ENCODE measurements at regions of chr7 and their contacts with region 1.

Region 1: DNA sequence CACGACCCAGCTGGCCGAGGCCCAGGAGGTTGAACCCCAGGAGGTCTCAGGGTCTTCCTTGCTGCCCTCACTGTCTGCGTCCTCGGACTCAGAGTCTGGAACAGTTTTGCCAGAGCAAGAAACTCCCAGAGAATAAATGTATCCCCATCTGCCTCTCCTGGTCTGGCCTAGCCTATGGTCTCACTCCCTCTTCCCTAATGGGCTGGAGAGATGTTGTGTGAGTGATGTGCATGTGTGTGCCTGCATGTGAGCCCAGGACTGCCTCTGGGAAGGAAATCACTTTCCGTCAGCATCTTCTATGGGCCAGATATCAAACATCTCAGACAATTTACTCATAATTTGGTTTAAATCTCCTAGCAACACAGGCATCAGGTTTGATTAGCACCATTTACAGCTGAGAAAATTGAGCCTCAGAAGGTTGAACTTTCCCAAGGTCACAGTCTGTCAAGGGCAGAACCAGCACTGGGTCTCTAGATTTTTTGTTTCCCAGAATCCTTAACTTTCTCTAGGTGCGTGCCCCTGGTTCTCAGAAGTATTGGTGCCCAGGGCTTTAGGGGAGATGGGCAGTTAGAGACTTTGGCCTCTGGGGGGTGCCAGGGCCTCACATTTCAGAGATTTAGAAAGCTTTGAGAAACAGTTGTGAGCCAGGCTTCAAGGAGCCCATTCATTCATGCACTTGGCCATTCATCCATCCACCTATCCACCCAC is 4.9 kb downstream of the TMEM270 start:
- DNase-seq: peak; percentile 67
- ATAC-seq: peak; percentile 74
- H3K4me3 ChIP-seq: no peak overlapping the region
- H3K27ac ChIP-seq: no peak overlapping the region
- H3K4me1 ChIP-seq: no peaks in the 10 kb centered on the region
- H3K27me3 ChIP-seq: no peaks in the 10 kb centered on the region
- CTCF ChIP-seq: peak; percentile 69

Region 2: DNA sequence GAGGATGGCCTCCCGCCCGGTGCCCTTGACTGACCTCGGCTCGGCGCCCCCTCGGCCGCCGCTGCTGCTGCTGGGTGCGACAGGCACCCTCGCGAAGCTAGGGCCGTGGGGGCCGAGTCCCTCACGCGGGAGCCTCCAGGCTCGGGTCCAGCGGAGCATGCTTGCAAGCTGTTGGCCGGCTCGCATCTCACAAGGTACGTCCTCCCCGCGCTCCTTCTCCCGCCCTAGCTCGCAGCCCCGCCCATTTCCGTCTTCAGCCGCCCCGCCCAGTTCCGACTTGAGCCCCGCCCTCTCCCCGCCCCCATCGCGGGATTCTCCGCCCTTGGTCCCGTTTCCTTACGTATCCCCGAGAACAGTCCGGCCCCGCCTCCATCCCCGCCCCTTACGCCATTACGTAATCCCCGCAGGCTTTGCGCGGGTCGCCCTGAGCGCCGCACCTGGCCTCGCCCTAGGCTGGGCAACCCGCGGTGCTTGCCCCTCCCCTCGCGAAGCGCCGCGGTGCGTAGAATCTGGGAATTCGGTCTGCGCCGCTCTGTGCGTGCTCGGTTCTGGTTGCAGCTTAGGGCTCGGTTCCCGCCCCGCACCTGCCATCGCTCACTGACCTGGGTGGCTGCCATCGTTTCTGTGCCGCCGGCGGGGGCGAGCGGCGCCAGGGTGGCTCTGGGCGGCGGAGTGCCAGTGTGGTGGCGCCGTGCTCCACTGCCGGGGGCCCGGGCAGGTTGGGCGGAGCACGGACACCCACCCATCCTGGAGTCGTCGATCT is 127.1 kb before region 1 on chr7 and contains the start of gene ABHD11:
- CTCF ChIA-PET with region 1: no interaction called
- POLR2A ChIA-PET with region 1: no interaction called
- intact Hi-C with region 1: no loop called
- DNase-seq: peak; percentile 95
- ATAC-seq: peak; percentile 76
- H3K4me3 ChIP-seq: peak within 1 kb of the TSS; percentile 92
- H3K27ac ChIP-seq: peak within 1 kb of the TSS; percentile 73
- H3K4me1 ChIP-seq: peaks cover 36% of the 10 kb centered on the region
- H3K27me3 ChIP-seq: no peaks in the 10 kb centered on the region
- CTCF ChIP-seq: 0 out of 2 replicates have a peak, but pooled peaks have one; percentile 14
- total RNA-seq, gene ABHD11: 38.6 and 41.4 TPM in 2 replicates

Region 3: GRCh38 chr7:73828107-73828803 is 37.6 kb before region 1 on chr7:
- CTCF ChIA-PET with region 1: no interaction called
- POLR2A ChIA-PET with region 1: no interaction called
- intact Hi-C with region 1: no loop called
- DNase-seq: peak; percentile 92
- ATAC-seq: peak; percentile 44
- H3K4me3 ChIP-seq: 0 out of 2 replicates have a peak overlapping the region, but pooled peaks have one; percentile 99
- H3K27ac ChIP-seq: peak overlapping the region; percentile 96
- H3K4me1 ChIP-seq: peaks cover 59% of the 10 kb centered on the region
- H3K27me3 ChIP-seq: no peaks in the 10 kb centered on the region
- CTCF ChIP-seq: no peak

Region 4: GRCh38 chr7:74002474-74003017 is 136.7 kb after region 1 on chr7:
- CTCF ChIA-PET with region 1: no interaction called
- POLR2A ChIA-PET with region 1: interaction called, 12 read pairs
- intact Hi-C with region 1: no loop called
- DNase-seq: peak; percentile 72
- ATAC-seq: peak; percentile 100
- H3K4me3 ChIP-seq: no peak overlapping the region
- H3K27ac ChIP-seq: peak overlapping the region; percentile 35; the same call in 1 of the 2 replicates
- H3K4me1 ChIP-seq: peaks cover 11% of the 10 kb centered on the region
- H3K27me3 ChIP-seq: no peaks in the 10 kb centered on the region
- CTCF ChIP-seq: no peak

Region 5: GRCh38 chr7:74026903-74027551 is 161.1 kb after region 1 on chr7:
- CTCF ChIA-PET with region 1: interaction called, 13 read pairs
- POLR2A ChIA-PET with region 1: no interaction called
- intact Hi-C with region 1: loop called (anchors 1 kb)
- DNase-seq: peak; percentile 63
- ATAC-seq: peak; percentile 68
- H3K4me3 ChIP-seq: no peak overlapping the region
- H3K27ac ChIP-seq: no peak overlapping the region
- H3K4me1 ChIP-seq: peaks cover 12% of the 10 kb centered on the region
- H3K27me3 ChIP-seq: peaks cover 18% of the 10 kb centered on the region
- CTCF ChIP-seq: peak; percentile 92

Region 6: DNA sequence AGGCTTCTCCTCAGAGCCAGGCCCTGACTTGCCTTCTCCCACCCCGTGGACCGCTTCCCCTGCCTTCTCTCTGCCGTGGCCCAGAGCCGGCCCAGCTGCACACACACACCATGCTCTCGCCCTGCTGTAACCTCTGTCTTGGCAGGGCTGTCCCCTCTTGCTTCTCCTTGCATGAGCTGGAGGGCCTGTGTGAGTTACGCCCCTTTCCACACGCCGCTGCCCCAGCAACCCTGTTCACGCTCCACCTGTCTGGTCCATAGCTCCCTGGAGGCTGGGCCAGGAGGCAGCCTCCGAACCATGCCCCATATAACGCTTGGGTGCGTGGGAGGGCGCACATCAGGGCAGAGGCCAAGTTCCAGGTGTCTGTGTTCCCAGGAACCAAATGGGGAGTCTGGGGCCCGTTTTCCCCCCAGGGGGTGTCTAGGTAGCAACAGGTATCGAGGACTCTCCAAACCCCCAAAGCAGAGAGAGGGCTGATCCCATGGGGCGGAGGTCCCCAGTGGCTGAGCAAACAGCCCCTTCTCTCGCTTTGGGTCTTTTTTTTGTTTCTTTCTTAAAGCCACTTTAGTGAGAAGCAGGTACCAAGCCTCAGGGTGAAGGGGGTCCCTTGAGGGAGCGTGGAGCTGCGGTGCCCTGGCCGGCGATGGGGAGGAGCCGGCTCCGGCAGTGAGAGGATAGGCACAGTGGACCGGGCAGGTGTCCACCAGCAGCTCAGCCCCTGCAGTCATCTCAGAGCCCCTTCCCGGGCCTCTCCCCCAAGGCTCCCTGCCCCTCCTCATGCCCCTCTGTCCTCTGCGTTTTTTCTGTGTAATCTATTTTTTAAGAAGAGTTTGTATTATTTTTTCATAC is 255.7 kb after region 1 on chr7:
- CTCF ChIA-PET with region 1: no interaction called
- POLR2A ChIA-PET with region 1: interaction called, 15 read pairs
- intact Hi-C with region 1: no loop called
- DNase-seq: no peak
- ATAC-seq: no peak
- H3K4me3 ChIP-seq: no peak overlapping the region
- H3K27ac ChIP-seq: no peak overlapping the region
- H3K4me1 ChIP-seq: no peaks in the 10 kb centered on the region
- H3K27me3 ChIP-seq: no peaks in the 10 kb centered on the region
- CTCF ChIP-seq: no peak

Measured in PC-3 (cell line).